Activated CD4-positive, alpha-beta T cell treated with anti-CD3 and anti-CD28 coated beads for 36 hours (primary cell): ENCODE measurements at regions of chr2 and their contacts with region 1.

Region 1: GRCh38 chr2:25337276-25337675 is 4.4 kb downstream of the DNMT3A start:
- DNase-seq: peak; percentile 60
- ATAC-seq: peak; percentile 31
- H3K4me3 Mint-ChIP-seq: no peak overlapping the region
- H3K27ac Mint-ChIP-seq: peak overlapping the region; percentile 89
- H3K4me1 Mint-ChIP-seq: peaks cover 70% of the 10 kb centered on the region
- H3K27me3 Mint-ChIP-seq: no peaks in the 10 kb centered on the region

Region 2: GRCh38 chr2:25323042-25323514 is 14.2 kb before region 1 on chr2:
- CTCF ChIA-PET with region 1: interaction called, 11 read pairs
- POLR2A ChIA-PET with region 1: no interaction called
- intact Hi-C with region 1: no loop called
- DNase-seq: peak; percentile 81
- ATAC-seq: peak; percentile 76
- H3K4me3 Mint-ChIP-seq: peak overlapping the region; percentile 62
- H3K27ac Mint-ChIP-seq: peak overlapping the region; percentile 96
- H3K4me1 Mint-ChIP-seq: peaks cover 59% of the 10 kb centered on the region
- H3K27me3 Mint-ChIP-seq: no peaks in the 10 kb centered on the region